ENCODE measurements at regions of chr2 and their contacts with region 1.

Region 1: DNA sequence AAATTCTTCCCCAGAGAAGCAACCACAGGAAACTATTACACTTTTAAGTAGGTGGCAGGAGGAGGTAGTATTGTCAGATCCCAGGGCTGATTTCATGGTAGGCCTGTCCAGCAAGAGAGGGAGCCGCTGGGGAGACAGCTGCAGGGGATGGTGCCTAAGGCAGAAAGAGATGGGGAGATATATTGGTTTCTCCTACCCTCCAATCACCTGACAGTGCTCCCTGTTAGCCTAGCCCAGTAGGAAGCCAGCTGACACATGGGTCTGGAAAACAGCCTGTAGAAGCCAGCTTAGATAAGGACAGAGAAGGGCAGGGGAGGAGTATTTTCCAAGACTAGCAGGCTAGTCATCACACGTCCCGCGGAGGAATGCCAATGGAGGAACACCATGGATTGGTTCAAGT is 8.2 kb upstream of the SPOPL start:
- DNase-seq: no peak
- ATAC-seq: no peak
- H3K4me3 ChIP-seq: no peak overlapping the region
- H3K27ac ChIP-seq: no peak overlapping the region
- H3K4me1 ChIP-seq: peaks cover 0 to 2% of the 10 kb centered on the region in 2 donors
- H3K27me3 ChIP-seq: no peaks in the 10 kb centered on the region

Region 2: DNA sequence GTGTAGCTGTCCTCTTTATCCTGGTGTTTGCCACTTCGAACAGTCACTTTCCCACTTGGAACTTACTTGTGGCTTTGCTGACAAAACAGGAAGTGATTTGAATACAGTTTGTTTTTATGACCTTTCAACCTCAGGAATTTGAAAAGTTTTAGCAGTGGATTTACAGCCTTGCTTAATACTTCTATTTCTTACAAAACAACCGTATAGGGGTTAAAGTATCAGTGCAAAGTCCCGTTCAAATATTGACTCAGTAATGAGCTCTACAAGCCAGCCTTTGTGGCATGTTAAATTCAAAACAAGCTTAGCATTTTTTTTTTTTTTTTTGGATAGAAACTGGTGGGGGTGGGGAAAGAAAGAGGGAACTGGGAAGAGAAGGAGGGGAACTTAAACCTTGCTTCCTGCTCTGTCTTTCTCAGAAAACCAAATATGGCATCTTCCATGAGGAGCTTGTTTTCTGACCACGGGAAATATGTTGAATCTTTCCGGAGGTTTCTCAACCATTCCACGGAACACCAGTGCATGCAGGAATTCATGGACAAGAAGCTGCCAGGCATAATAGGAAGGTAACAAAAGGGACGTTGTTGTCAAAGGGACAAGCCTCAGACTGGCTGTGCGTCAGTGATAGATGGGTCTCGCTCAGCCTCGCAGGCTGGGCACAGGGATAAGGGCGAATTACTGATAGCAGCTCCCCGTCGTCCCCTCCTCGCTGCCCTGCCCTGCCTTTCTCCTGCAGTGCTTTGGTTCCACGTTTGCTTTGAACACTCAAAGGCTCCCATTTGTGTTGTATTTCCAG is 529.1 kb before region 1 on chr2 and contains the start of gene HNMT:
- intact Hi-C with region 1: loop called in 1 of 2 experiments (anchors 10 kb)
- DNase-seq: peak in 1 of 2 donors; percentile 55
- ATAC-seq: peak; percentile 77
- H3K4me3 ChIP-seq: peak within 1 kb of the TSS; percentile 20 to 90
- H3K27ac ChIP-seq: peak within 1 kb of the TSS; percentile 60 to 83
- H3K4me1 ChIP-seq: peaks cover 0 to 2% of the 10 kb centered on the region in 2 donors
- H3K27me3 ChIP-seq: no peaks in the 10 kb centered on the region
- total RNA-seq, gene HNMT: 35.8 to 82.8 TPM

Measured in aorta (tissue), 5 donors.